ENCODE measurements at regions of chr12 and their contacts with region 1.

Region 1: GRCh38 chr12:51238510-51239334 is at the start of gene DAZAP2:
- DNase-seq: peak; percentile 97
- H3K4me3 Mint-ChIP-seq: peak within 1 kb of the TSS; percentile 94
- H3K27ac Mint-ChIP-seq: peak within 1 kb of the TSS; percentile 98
- H3K4me1 Mint-ChIP-seq: peaks cover 33% of the 10 kb centered on the region
- H3K27me3 Mint-ChIP-seq: no peaks in the 10 kb centered on the region
- total RNA-seq, gene DAZAP2: 106 to 119 TPM

Region 2: DNA sequence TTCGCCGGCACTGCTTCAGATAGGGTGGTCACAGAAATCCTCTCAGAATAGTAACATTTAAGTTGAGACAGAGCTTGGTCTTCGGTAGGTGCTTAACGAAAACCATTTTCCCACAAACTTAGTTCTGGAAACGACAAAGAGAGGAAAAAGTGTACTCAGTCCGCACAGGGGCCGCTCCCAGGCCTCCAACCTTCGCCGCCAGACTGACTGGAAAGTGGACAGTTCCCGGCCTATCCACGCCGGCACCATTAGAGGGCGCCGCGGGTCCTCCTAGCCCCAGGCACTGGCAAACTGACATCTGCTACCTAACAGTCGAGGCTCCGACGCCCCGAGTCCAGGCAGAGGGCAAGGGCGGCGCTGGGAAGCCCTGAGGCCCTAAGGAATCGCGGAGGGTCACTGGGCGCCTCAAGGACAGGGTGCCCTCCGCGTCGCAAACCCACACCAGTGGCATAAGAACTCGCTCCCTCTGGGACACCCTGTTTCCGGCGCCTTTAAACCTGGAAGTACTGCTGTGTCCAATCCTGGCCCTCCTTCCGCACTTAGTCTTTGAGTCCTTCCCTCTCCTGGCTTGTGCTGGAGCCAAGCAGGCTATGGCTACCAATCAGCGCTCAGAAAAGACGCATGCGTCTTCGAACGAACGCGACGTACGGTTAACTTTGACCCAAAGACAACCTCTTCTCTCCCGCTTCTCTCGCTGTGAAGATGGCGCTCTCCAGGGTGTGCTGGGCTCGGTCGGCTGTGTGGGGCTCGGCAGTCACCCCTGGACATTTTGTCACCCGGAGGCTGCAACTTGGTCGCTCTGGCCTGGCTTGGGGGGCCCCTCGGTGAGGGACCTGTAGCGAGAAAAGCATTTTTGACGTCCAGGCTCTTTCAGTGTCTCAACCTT is 190.8 kb before region 1 on chr12 and contains the start of gene LETMD1:
- CTCF ChIA-PET with region 1: interaction called, 4 read pairs
- POLR2A ChIA-PET with region 1: interaction called, 3 read pairs
- intact Hi-C with region 1: loop called (anchors 1 kb)
- DNase-seq: peak; percentile 95
- H3K4me3 Mint-ChIP-seq: peak within 1 kb of the TSS; percentile 97
- H3K27ac Mint-ChIP-seq: peak within 1 kb of the TSS; percentile 96
- H3K4me1 Mint-ChIP-seq: peaks cover 31% of the 10 kb centered on the region
- H3K27me3 Mint-ChIP-seq: no peaks in the 10 kb centered on the region
- total RNA-seq, gene LETMD1: 79.8 to 84.0 TPM

Region 3: DNA sequence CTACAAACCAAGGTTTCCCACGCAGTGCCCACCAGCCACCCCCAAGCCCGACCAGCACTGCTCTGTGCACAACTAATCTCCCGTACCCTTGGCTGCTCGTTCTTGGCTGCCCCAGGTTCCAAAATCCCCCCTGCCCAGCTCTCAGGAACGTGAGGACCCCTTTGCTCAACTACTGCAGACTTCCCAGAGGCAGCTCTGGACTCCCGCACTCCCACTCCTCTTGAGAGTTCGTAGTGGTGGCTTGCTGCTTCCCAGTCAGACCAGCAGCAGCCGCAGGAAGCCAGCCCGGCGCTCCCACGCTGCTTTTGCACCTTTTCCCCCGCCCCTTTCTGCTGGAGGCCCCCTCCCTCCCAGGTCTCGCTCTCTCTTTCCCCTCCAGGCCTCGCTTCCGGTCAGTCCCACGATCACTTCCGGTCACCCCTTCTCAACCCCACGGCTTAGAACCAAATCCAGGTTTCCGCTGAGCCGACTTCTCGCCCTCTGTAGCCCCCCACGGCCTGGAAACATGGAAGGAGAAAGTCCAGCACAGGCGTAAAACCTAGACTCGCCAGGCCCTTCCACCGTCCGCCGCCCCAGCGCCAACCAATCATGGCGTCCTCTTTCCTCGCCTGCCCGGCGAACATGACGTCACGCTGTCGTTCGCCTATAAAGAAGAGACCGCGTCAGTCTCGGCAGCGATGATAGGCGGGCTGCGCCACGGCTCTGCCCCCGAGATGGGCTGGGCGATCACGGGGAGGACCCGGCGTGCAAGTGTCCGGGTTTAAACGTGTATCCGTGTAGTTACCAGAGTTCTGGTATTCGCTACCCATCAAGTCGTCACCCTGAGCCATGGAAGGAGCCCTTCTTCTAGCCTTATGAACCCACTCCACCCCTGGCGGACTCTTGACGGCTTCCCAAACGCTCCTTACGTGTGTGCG is 65.9 kb before region 1 on chr12 and contains the start of gene TFCP2:
- CTCF ChIA-PET with region 1: no interaction called
- POLR2A ChIA-PET with region 1: interaction called, 3 read pairs
- intact Hi-C with region 1: loop called (anchors 1 kb)
- DNase-seq: peak; percentile 96
- H3K4me3 Mint-ChIP-seq: peak within 1 kb of the TSS; percentile 63
- H3K27ac Mint-ChIP-seq: no peak within 1 kb of the TSS
- H3K4me1 Mint-ChIP-seq: peaks cover 9% of the 10 kb centered on the region
- H3K27me3 Mint-ChIP-seq: no peaks in the 10 kb centered on the region
- total RNA-seq, gene TFCP2: 32.0 to 34.1 TPM

Region 4: DNA sequence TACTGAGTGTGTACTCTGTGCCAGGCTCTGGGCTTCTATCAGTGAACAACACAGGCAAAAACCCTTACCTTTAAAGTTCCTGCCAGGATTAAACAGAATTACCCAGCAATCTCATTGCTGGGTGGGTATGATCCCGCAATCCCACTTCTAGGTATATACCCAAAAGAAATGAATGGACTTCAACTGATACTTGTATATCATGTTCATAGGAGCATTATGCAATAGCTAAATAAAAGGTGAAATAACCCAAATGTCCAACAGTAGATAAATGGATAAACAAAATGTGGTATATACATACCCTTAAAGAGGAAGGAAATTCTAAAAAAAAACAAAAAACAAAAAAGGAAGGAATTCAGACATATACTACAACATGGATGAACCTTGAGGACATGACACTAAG is 14.6 kb after region 1 on chr12:
- CTCF ChIA-PET with region 1: interaction called, 29 read pairs
- POLR2A ChIA-PET with region 1: interaction called, 5 read pairs
- intact Hi-C with region 1: no loop called
- DNase-seq: no peak
- H3K4me3 Mint-ChIP-seq: no peak overlapping the region
- H3K27ac Mint-ChIP-seq: no peak overlapping the region
- H3K4me1 Mint-ChIP-seq: peaks cover 2% of the 10 kb centered on the region
- H3K27me3 Mint-ChIP-seq: no peaks in the 10 kb centered on the region

Region 5: GRCh38 chr12:51281202-51281924 is 42.6 kb after region 1 on chr12:
- CTCF ChIA-PET with region 1: no interaction called
- POLR2A ChIA-PET with region 1: no interaction called
- intact Hi-C with region 1: no loop called
- DNase-seq: no peak
- H3K4me3 Mint-ChIP-seq: no peak overlapping the region
- H3K27ac Mint-ChIP-seq: no peak overlapping the region
- H3K4me1 Mint-ChIP-seq: peaks cover 4% of the 10 kb centered on the region
- H3K27me3 Mint-ChIP-seq: no peaks in the 10 kb centered on the region

Region 6: DNA sequence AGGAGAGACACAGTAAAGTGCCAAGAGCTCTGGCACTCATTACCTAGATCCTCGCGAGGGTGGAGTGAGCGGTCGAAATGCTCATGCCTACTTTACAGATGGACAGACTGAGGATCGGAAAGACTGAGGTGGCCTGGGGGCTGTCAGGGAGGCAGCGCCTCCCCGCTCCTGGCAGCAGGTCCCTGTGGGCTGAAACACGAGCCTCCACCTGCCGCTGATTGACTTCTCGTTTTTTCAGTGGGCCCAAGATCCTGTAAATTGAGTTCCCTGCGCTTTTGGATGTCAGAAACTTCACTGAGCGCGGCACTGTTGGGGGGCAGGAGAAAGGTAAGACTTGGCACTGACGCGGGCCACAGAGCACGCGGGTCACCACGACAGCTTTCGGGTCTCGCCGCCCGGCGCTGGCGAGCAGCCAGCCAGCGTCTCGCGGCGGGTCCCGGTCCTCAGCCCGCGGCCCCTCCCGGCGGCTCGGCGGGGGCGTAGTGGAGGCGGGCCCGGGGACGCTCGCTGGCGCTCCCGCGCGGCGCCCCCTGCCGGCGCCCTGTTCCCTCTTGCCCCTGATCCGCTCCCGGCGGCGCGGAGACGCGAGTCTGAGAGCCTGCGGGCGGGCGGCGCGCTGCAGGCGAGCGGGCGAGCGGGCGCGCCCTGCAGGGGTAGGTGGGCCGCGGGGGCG is 351.8 kb after region 1 on chr12:
- CTCF ChIA-PET with region 1: no interaction called
- POLR2A ChIA-PET with region 1: no interaction called
- intact Hi-C with region 1: no loop called
- DNase-seq: peak; percentile 82
- H3K4me3 Mint-ChIP-seq: peak overlapping the region; percentile 73
- H3K27ac Mint-ChIP-seq: peak overlapping the region; percentile 29
- H3K4me1 Mint-ChIP-seq: peaks cover 13% of the 10 kb centered on the region
- H3K27me3 Mint-ChIP-seq: peaks cover 48% of the 10 kb centered on the region